ENCODE measurements at regions of chr1 and their contacts with region 1.

Region 1: DNA sequence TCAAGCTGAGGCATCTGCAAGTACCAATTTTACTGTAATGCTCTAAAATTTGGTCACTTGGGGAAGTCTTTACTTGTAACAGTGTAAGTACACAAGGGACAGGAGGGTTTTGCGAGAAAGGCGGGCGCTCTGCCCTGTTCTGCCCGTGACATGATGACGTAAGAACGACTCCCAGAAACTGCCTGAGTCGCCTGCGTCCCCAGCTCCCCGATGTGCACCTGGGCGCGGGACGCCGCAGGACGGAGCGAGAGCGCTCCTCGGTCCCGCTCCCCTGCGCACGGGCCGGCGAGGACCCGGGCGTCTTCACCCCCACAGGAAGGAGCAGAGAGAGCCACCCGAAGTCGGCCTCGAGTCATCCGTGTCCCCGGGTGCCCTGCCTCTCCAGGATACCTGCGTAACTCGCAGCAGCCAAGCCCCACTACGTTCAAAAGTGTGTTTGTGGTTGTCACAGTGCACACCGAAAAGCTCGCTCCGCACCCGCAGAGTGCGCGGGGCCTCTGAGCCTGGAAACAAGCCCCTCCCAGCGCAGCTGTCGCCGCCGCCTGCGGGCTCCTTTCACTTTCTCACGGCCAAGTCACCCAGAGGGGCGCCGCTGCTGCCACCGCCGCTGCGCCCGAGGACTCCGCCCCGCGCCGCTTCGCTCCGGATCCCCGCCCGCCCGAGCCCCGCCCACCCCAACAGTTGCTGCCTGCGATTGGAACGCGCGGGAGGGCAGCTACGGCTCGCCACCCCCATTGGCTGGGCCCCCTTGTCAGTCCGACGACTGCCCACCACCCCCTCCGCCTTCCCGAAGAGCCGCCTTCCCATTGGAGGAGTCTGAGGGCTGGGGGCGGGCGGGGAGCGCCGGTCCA is 3.2 kb upstream of the ZBTB18 start:
- DNase-seq: peak; percentile 97
- H3K4me3 ChIP-seq: peak overlapping the region; percentile 69
- H3K27ac ChIP-seq: peak overlapping the region; percentile 82
- H3K4me1 ChIP-seq: peaks cover 42% of the 10 kb centered on the region
- H3K27me3 ChIP-seq: no peaks in the 10 kb centered on the region
- CTCF ChIP-seq: 0 out of 2 replicates have a peak, but pooled peaks have one; percentile 14

Region 2: GRCh38 chr1:243548516-243548915 is 499.3 kb before region 1 on chr1:
- CTCF ChIA-PET with region 1: no interaction called
- POLR2A ChIA-PET with region 1: interaction called, 10 read pairs
- intact Hi-C with region 1: no loop called
- DNase-seq: no peak
- H3K4me3 ChIP-seq: no peak overlapping the region
- H3K27ac ChIP-seq: no peak overlapping the region
- H3K4me1 ChIP-seq: peaks cover 11% of the 10 kb centered on the region; the same call in 1 of the 2 replicates
- H3K27me3 ChIP-seq: no peaks in the 10 kb centered on the region
- CTCF ChIP-seq: no peak

Region 3: GRCh38 chr1:243850452-243851256 is 197.2 kb before region 1 on chr1:
- CTCF ChIA-PET with region 1: no interaction called
- POLR2A ChIA-PET with region 1: no interaction called
- intact Hi-C with region 1: loop called (anchors 1 kb)
- DNase-seq: peak; percentile 70 to 92
- H3K4me3 ChIP-seq: peak overlapping the region; percentile 69
- H3K27ac ChIP-seq: peak overlapping the region; percentile 85
- H3K4me1 ChIP-seq: peaks cover 49% of the 10 kb centered on the region
- H3K27me3 ChIP-seq: no peaks in the 10 kb centered on the region
- CTCF ChIP-seq: no peak

Region 4: GRCh38 chr1:243974451-243975292 is 73.2 kb before region 1 on chr1:
- CTCF ChIA-PET with region 1: interaction called, 22 read pairs
- POLR2A ChIA-PET with region 1: no interaction called
- intact Hi-C with region 1: no loop called
- DNase-seq: no peak
- H3K4me3 ChIP-seq: no peak overlapping the region
- H3K27ac ChIP-seq: no peak overlapping the region
- H3K4me1 ChIP-seq: no peaks in the 10 kb centered on the region
- H3K27me3 ChIP-seq: no peaks in the 10 kb centered on the region
- CTCF ChIP-seq: no peak

Region 5: GRCh38 chr1:244302889-244303613 is 255.2 kb after region 1 on chr1:
- CTCF ChIA-PET with region 1: no interaction called
- POLR2A ChIA-PET with region 1: interaction called, 14 read pairs
- intact Hi-C with region 1: no loop called
- DNase-seq: peak; percentile 84 to 92
- H3K4me3 ChIP-seq: no peak overlapping the region
- H3K27ac ChIP-seq: peak overlapping the region; percentile 69
- H3K4me1 ChIP-seq: peaks cover 39% of the 10 kb centered on the region
- H3K27me3 ChIP-seq: no peaks in the 10 kb centered on the region
- CTCF ChIP-seq: no peak